ENCODE measurements at regions of chr7 and their contacts with region 1.

Region 1: DNA sequence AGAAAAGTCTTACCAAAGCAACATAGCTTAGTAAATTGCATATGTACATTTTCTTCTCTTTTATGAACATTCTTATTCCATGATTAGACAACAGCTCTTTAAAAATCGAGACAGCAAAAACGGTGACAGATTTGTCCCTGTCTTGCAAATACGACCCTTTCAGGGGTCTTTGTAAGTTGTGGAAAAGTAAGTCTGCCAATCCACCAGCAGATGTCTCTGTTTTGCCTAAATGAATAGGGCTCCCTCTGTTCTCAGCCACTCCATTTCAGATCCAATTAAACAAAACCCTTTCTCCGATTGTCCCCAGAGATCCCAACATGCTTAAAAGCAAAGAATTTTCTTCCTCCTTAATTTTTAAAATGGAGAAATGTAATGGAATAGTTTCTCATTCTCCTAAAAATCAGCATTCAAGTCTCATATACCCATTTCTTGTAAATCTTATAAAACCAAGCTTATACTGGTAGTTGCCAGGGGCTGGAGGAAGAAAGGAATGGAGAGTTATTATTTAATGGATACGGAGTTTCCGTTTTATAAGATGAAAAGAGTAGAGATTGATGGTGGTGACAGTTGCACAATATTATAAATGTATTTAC is 61.0 kb upstream of the NFE2L3 start:
- DNase-seq: peak; percentile 37
- ATAC-seq: no peak
- H3K4me3 Mint-ChIP-seq: peak overlapping the region; percentile 5
- H3K27ac Mint-ChIP-seq: peak overlapping the region; percentile 0
- H3K4me1 Mint-ChIP-seq: peaks cover 26% of the 10 kb centered on the region
- H3K27me3 Mint-ChIP-seq: no peaks in the 10 kb centered on the region

Region 2: DNA sequence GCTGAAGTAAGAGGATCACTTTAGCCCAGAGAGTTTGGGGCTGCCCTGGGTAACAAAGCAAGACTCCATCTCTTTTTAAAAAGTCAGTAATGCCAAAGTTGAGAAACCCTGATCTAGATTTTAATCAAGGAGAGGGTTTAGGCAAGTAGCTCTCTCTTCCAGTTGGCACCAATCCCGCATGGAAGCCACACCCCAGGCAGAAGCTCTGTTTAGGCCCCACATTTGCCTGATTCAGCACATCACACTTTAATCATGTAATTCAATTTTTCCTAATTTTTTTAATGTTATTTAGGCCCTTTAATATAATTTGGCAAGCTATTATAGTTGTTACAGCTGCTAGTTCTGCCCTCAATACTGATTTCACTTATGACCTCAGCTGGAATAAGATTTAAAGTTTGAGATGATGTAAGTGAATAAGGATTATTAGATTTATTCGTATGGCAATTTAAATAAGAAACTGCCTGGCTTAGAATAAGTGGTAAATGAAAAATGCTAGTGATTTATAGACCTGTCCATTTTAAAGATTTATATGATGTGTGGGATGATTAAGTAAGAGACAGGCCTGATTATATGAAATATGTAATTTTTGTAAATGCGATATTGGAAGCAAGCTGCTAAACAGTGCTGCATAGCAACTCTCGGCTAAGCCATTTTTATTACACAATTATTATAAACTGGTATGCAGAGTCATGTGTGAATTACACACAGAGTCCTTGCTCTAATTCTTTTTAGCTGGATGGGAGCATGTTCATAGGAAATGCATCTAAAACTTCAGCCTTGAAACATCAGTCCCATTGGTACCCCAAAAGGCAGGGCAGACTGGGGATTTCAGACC is 19.2 kb before region 1 on chr7:
- CTCF ChIA-PET with region 1: interaction called, 88 read pairs
- POLR2A ChIA-PET with region 1: no interaction called
- DNase-seq: no peak
- ATAC-seq: no peak
- H3K4me3 Mint-ChIP-seq: no peak overlapping the region
- H3K27ac Mint-ChIP-seq: no peak overlapping the region
- H3K4me1 Mint-ChIP-seq: no peaks in the 10 kb centered on the region
- H3K27me3 Mint-ChIP-seq: peaks cover 27% of the 10 kb centered on the region

Region 3: GRCh38 chr7:26112203-26112740 is 21.2 kb after region 1 on chr7:
- CTCF ChIA-PET with region 1: interaction called, 22 read pairs
- POLR2A ChIA-PET with region 1: interaction called, 3 read pairs
- DNase-seq: no peak
- ATAC-seq: no peak
- H3K4me3 Mint-ChIP-seq: no peak overlapping the region
- H3K27ac Mint-ChIP-seq: no peak overlapping the region
- H3K4me1 Mint-ChIP-seq: peaks cover 4% of the 10 kb centered on the region
- H3K27me3 Mint-ChIP-seq: peaks cover 6% of the 10 kb centered on the region

Region 4: DNA sequence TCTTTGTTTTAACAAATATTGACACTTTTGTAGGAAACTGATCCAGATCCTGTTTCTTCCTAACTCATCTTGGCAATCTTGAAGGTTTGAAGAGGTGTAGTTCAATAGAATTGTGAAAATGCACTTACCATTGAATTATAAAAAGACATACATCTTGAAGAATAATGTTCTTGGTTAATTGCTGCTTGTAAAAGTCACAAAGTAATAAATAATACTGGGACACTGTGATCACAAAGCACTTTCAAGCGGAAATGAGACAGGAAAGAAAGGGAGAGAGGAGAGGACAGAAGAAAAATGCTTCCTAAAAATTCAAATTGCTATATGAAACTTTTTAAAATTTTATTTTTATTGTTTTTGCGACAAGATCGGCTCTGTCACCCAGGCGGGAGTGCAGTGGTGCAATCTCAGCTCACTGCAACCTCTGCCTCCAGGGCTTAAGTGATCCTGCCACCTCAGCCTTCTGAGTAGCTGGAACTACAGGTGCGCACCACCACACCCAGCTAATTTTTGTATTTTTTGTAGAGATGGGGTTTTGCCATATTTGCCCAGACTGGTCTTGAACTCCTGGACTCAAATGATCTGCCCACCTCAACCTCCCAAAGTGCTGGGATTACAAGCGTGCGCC is 45.9 kb after region 1 on chr7:
- CTCF ChIA-PET with region 1: interaction called, 29 read pairs
- POLR2A ChIA-PET with region 1: no interaction called
- DNase-seq: no peak
- ATAC-seq: no peak
- H3K4me3 Mint-ChIP-seq: no peak overlapping the region
- H3K27ac Mint-ChIP-seq: no peak overlapping the region
- H3K4me1 Mint-ChIP-seq: no peaks in the 10 kb centered on the region
- H3K27me3 Mint-ChIP-seq: peaks cover 15% of the 10 kb centered on the region

Region 5: DNA sequence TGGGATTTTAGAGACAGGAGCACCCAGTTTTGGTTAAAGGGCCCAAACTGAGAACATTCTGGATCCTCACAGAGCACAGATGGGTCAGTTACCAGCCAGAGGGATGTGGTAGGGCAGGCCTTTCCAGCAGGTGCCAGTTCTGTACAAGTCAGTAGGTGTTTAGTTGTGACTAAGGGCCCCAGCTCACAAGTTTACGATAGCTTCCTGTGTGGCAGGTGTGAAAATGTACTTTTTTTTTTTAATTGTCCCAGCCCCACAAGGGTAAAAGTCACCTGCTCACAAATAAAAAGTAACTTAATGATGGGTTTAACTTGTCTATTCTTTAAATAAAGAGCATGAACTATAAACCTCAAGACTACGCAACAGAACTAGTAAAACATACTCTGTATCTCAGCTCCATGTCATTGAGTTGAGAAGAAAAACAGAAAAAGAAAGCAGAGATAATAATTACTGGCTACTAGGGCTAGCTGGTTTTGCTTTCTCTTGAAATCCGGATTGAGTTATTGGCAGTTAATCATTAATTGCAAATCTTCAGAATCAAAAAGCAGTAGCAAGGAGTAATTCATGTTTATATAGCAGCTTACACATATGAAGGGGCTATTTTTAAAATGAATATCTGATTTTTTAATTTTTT is 76.4 kb after region 1 on chr7:
- CTCF ChIA-PET with region 1: interaction called, 28 read pairs
- POLR2A ChIA-PET with region 1: no interaction called
- DNase-seq: peak; percentile 43
- ATAC-seq: peak; percentile 82
- H3K4me3 Mint-ChIP-seq: no peak overlapping the region
- H3K27ac Mint-ChIP-seq: peak overlapping the region; percentile 71
- H3K4me1 Mint-ChIP-seq: peaks cover 42% of the 10 kb centered on the region
- H3K27me3 Mint-ChIP-seq: no peaks in the 10 kb centered on the region

Region 6: GRCh38 chr7:26200444-26201246 is 109.6 kb after region 1 on chr7 and contains the start of gene HNRNPA2B1:
- CTCF ChIA-PET with region 1: interaction called, 222 read pairs
- POLR2A ChIA-PET with region 1: interaction called, 187 read pairs
- DNase-seq: peak; percentile 99
- ATAC-seq: peak; percentile 72
- H3K4me3 Mint-ChIP-seq: peak within 1 kb of the TSS; percentile 100
- H3K27ac Mint-ChIP-seq: peak within 1 kb of the TSS; percentile 100
- H3K4me1 Mint-ChIP-seq: peaks cover 35% of the 10 kb centered on the region
- H3K27me3 Mint-ChIP-seq: no peaks in the 10 kb centered on the region
- total RNA-seq, gene HNRNPA2B1: 882 to 899 TPM

Measured in activated CD8-positive, alpha-beta T cell treated with anti-CD3 and anti-CD28 coated beads, Interleukin-2, amount 10 ng/mL, durations not matched to agents 7 days and 5 days (primary cell).